A549 (cell line): ENCODE measurements at regions of chr22 and their contacts with region 1.

Region 1: DNA sequence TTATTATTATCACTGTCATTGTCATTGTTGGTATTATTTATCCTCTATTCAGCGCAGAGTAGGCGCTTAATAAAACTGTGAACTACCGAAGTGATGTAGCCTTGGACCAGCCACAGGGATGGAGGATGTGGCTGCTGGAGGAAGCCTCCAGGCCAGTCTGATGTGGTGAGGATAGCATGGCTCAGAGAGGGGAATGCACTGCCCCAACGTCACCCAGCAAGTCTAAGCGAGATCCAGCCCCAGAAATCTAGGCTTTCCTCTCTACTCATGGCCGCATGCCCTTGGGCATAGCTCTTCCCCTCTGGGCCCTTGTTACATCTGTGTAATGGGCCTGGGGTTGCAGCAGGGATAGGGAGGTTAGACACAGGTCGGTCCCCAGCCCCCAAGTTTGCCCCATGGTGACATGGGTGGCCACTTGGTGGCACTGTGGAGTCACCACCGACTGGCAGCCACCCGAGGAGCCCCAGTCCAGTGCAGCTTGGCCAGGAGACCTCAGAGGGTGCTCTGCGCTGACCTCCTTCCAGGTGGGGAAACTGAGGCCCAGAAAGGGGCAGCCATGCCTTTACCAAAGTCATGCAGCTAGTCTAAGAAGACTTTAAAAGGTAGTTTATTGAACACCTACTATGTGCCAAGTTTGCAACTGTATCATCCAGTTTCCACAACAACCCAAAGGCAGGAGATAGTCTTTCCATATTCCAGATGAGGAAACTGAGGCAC is 395.7 kb downstream of the MN1 start:
- DNase-seq: peak; percentile 48 to 55
- ATAC-seq: peak; percentile 79 to 93
- H3K4me3 ChIP-seq: no peak overlapping the region
- H3K27ac ChIP-seq: peak overlapping the region; percentile 45 to 75; a peak in 5 of 6 replicates
- H3K4me1 ChIP-seq: no peaks in the 10 kb centered on the region
- CTCF ChIP-seq: peak; percentile 64
- EP300 ChIP-seq: no peak
- POLR2A ChIP-seq: no peak
- RAD21 ChIP-seq: peak; percentile 79 to 88

Region 2: GRCh38 chr22:27345142-27346090 is 60.4 kb before region 1 on chr22:
- CTCF ChIA-PET with region 1: no interaction called
- POLR2A ChIA-PET with region 1: no interaction called
- DNase-seq: no peak
- ATAC-seq: no peak
- H3K4me3 ChIP-seq: no peak overlapping the region
- H3K27ac ChIP-seq: no peak overlapping the region
- H3K4me1 ChIP-seq: peaks cover 4% of the 10 kb centered on the region; the same call in 1 of the 3 replicates
- CTCF ChIP-seq: no peak
- EP300 ChIP-seq: no peak
- POLR2A ChIP-seq: no peak
- RAD21 ChIP-seq: no peak

Region 3: GRCh38 chr22:27420817-27421361 is 15.1 kb after region 1 on chr22:
- CTCF ChIA-PET with region 1: interaction called, 26 read pairs
- POLR2A ChIA-PET with region 1: no interaction called
- DNase-seq: no peak
- ATAC-seq: peak in 1 of 2 experiments; percentile 33; a peak in 1 of 6 replicates
- H3K4me3 ChIP-seq: no peak overlapping the region
- H3K27ac ChIP-seq: peak overlapping the region in 1 of 2 experiments; percentile 75; a peak in 3 of 6 replicates
- H3K4me1 ChIP-seq: peaks cover 15% of the 10 kb centered on the region
- CTCF ChIP-seq: no peak
- EP300 ChIP-seq: no peak
- POLR2A ChIP-seq: no peak
- RAD21 ChIP-seq: no peak

Region 4: GRCh38 chr22:27804470-27805297 is 398.9 kb after region 1 on chr22:
- CTCF ChIA-PET with region 1: interaction called, 11 read pairs
- POLR2A ChIA-PET with region 1: no interaction called
- DNase-seq: peak; percentile 57 to 59
- ATAC-seq: peak; percentile 72 to 78
- H3K4me3 ChIP-seq: no peak overlapping the region
- H3K27ac ChIP-seq: peak overlapping the region; percentile 56 to 76; a peak in 5 of 6 replicates
- H3K4me1 ChIP-seq: peaks cover 16% of the 10 kb centered on the region
- CTCF ChIP-seq: peak; percentile 60
- EP300 ChIP-seq: no peak
- POLR2A ChIP-seq: no peak
- RAD21 ChIP-seq: peak; percentile 81 to 89